A549 (cell line): ENCODE measurements at regions of chr3 and their contacts with region 1.

Region 1: DNA sequence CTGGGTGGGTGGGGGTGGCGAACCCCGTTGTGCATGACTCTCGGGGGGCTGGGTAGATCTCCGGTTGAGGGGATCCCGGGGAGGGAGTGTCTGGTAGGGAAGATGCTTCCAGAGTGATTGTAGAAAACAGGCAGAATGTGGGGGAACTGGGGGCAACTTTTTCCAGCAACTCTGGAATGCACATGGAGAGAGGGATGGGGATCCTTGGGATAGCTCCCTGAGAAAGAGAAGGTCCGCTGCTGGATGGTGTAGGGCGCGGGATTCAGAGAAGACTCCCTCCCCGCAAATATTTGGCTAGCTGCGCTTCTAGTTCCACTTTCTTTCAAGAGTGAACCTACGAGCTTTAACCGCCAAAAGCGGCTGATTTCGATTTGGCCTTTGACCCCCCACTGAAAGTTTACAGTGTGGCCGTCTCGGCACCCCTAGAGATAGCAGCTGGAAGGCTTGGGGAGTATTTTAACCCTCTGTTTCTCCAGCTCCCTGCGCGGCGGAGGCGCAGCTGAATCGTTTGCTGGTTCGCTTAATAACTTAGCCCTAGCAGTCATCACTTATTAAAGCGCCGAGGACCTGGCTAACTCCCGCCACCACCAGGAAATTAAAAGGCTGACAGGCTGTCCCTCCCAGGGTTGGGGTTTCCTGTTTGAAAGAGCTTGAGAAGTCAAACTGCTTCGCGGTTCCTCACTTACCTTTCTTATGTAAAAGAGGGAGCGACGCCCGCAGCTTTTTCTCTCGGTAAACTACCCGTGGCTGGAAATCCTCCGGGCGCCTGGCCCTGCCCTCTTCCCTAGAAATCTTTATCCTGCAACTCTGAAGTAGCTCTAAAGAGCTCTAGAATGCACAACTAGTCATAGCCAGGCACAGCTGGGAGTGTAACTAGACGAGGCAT is 1.2 kb downstream of the PHLDB2 start:
- DNase-seq: peak; percentile 88 to 90
- ATAC-seq: peak; percentile 83 to 86
- H3K4me3 ChIP-seq: peak overlapping the region; percentile 81
- H3K27ac ChIP-seq: peak overlapping the region; percentile 91 to 99
- H3K4me1 ChIP-seq: peaks cover 46% of the 10 kb centered on the region
- CTCF ChIP-seq: peak; percentile 61
- EP300 ChIP-seq: no peak
- POLR2A ChIP-seq: no peak; the same call in 1 of the 2 replicates
- RAD21 ChIP-seq: peak; percentile 81 to 93

Region 2: GRCh38 chr3:111729087-111729846 is 130.9 kb before region 1 on chr3:
- CTCF ChIA-PET with region 1: interaction called, 9 read pairs
- POLR2A ChIA-PET with region 1: interaction called, 12 read pairs
- DNase-seq: no peak
- ATAC-seq: no peak
- H3K4me3 ChIP-seq: no peak overlapping the region
- H3K27ac ChIP-seq: peak overlapping the region in 1 of 2 experiments; percentile 63; a peak in 3 of 6 replicates
- H3K4me1 ChIP-seq: peaks cover 41% of the 10 kb centered on the region
- CTCF ChIP-seq: no peak
- EP300 ChIP-seq: no peak
- POLR2A ChIP-seq: no peak
- RAD21 ChIP-seq: no peak

Region 3: DNA sequence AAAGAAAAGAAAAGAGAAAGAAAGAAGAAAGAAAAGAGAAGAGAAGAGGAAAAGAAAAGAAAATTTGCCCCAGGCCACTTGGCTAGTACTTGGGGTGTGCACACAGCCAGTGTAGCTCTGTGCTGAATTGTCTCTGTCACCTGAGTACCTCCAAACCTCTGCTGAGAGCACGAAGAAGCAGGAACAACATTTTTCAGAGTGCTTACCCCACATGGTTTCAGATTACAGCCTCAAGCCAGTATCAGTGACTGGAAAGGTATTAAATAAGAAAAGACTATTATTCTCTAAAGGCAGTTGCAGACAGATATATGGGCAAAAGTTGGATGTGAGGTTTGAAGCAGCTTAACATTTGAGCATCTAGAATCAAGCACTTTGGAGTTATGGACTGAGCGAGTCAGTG is 114.4 kb before region 1 on chr3:
- CTCF ChIA-PET with region 1: interaction called, 12 read pairs
- POLR2A ChIA-PET with region 1: interaction called, 4 read pairs
- DNase-seq: no peak
- ATAC-seq: no peak
- H3K4me3 ChIP-seq: no peak overlapping the region
- H3K27ac ChIP-seq: no peak overlapping the region
- H3K4me1 ChIP-seq: peaks cover 36% of the 10 kb centered on the region
- CTCF ChIP-seq: no peak
- EP300 ChIP-seq: no peak
- POLR2A ChIP-seq: no peak
- RAD21 ChIP-seq: no peak

Region 4: GRCh38 chr3:111810909-111811308 is 49.3 kb before region 1 on chr3:
- CTCF ChIA-PET with region 1: interaction called, 12 read pairs
- POLR2A ChIA-PET with region 1: interaction called, 5 read pairs
- DNase-seq: peak in 1 of 2 experiments; percentile 75
- ATAC-seq: peak; percentile 60 to 82; a peak in 4 of 6 replicates
- H3K4me3 ChIP-seq: no peak overlapping the region
- H3K27ac ChIP-seq: peak overlapping the region; percentile 72 to 84
- H3K4me1 ChIP-seq: peaks cover 65% of the 10 kb centered on the region
- CTCF ChIP-seq: no peak
- EP300 ChIP-seq: no peak
- POLR2A ChIP-seq: no peak
- RAD21 ChIP-seq: no peak

Region 5: DNA sequence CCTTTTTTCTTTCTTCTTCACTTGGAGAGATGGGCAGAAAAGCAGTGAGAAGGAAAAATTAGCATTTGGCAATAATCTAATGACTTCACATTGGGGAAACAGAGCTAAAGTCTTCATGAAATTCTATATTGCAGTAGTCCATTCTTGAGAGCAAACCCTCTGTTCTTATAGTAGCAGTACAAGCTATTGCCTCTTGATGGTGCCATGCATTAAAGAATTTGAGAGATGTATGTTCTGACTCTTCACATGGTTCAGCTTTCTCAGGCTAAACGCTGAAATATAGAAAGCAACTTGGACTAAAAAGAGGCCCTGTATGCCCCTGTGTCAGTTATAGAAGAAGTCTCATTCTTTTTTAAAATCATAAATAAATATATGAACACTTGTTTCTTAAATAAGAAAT is 34.9 kb after region 1 on chr3:
- CTCF ChIA-PET with region 1: interaction called, 11 read pairs
- POLR2A ChIA-PET with region 1: no interaction called
- DNase-seq: peak; percentile 47 to 65
- ATAC-seq: peak; percentile 87 to 92
- H3K4me3 ChIP-seq: no peak overlapping the region
- H3K27ac ChIP-seq: peak overlapping the region in 1 of 2 experiments; percentile 72; a peak in 2 of 6 replicates
- H3K4me1 ChIP-seq: peaks cover 24% of the 10 kb centered on the region
- CTCF ChIP-seq: peak; percentile 67
- EP300 ChIP-seq: no peak
- POLR2A ChIP-seq: no peak
- RAD21 ChIP-seq: peak; percentile 75 to 77

Region 6: GRCh38 chr3:111967651-111968274 is 107.5 kb after region 1 on chr3:
- CTCF ChIA-PET with region 1: interaction called, 63 read pairs
- POLR2A ChIA-PET with region 1: interaction called, 4 read pairs
- DNase-seq: peak; percentile 31 to 84
- ATAC-seq: peak; percentile 92 to 97
- H3K4me3 ChIP-seq: no peak overlapping the region
- H3K27ac ChIP-seq: peak overlapping the region; percentile 50 to 79
- H3K4me1 ChIP-seq: peaks cover 25% of the 10 kb centered on the region
- CTCF ChIP-seq: peak; percentile 92
- EP300 ChIP-seq: no peak
- POLR2A ChIP-seq: no peak
- RAD21 ChIP-seq: peak; percentile 95 to 98